ENCODE measurements at regions of chr20 and their contacts with region 1.

Region 1: DNA sequence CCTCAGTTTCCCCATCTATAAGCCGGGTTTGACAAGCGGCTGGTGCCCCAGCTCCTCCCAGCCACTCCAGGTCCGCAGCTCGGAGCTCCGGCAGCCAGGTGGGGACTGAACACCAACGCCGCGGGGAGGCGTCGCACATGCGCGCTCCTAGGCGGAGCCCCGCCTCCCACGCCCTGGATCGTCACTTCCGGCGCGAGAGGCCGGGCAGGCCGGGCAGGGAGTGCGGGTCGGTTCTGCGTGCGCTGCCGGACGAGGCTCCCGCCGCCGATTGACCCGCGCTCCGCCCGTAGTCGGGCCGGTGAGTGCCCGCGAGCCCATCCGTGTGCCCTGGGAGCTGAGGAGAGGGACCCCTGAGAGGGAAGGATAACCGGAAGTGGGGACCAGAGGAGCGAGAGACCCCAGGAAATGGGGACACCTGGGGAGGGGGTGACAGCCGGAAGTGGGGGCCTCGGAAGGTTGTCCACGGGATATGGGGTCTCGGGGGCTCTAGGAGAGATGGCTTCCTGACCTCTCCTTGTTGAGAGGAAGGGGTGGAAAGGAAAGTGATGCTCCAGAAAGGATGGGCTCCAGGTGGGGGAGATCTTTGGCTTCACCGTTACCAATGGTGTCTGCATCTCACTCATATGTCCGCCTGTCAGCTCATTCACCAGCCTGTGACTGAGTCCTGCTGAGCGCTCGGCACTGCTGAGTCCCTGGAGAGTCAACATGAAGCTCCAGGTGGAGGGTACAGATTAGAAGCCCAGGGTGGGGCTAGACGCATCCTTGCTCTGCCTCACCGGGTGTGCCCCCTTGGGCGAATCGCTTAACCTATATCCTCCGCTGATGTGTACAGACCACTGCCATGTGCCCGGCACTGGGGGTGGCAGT is at the start of gene TTPAL:
- DNase-seq: peak; percentile 68
- ATAC-seq: peak; percentile 97
- H3K4me3 ChIP-seq: peak within 1 kb of the TSS; percentile 75
- H3K27ac ChIP-seq: peak within 1 kb of the TSS; percentile 90
- H3K4me1 ChIP-seq: no peaks in the 10 kb centered on the region; the same call in 1 of the 2 replicates
- H3K27me3 ChIP-seq: no peaks in the 10 kb centered on the region
- CTCF ChIP-seq: peak; percentile 11 to 60 (median 17); a peak in 3 of 6 replicates
- EP300 ChIP-seq: no peak
- POLR2A ChIP-seq: peak; percentile 100
- RAD21 ChIP-seq: peak; percentile 32; the same call in 1 of the 2 replicates
- polyA plus RNA-seq, gene TTPAL: 4.0 to 4.3 TPM

Region 2: GRCh38 chr20:44521484-44522481 is 45.9 kb after region 1 on chr20 and contains the start of gene SERINC3:
- CTCF ChIA-PET with region 1: interaction called, 15 read pairs
- POLR2A ChIA-PET with region 1: interaction called, 12 read pairs
- RAD21 ChIA-PET with region 1: interaction called, 3 read pairs
- SMC1A ChIA-PET with region 1: interaction called, 8 read pairs
- in situ Hi-C with region 1: no loop called
- intact Hi-C with region 1: no loop called
- DNase-seq: peak; percentile 78
- ATAC-seq: peak; percentile 98
- H3K4me3 ChIP-seq: peak within 1 kb of the TSS; percentile 94
- H3K27ac ChIP-seq: peak within 1 kb of the TSS; percentile 93
- H3K4me1 ChIP-seq: peaks cover 7% of the 10 kb centered on the region; the same call in 1 of the 2 replicates
- H3K27me3 ChIP-seq: no peaks in the 10 kb centered on the region
- CTCF ChIP-seq: peak in 2 of 3 experiments; percentile 27 to 29; a peak in 3 of 6 replicates
- EP300 ChIP-seq: peak; percentile 23 to 25; a peak in 1 of 4 replicates
- POLR2A ChIP-seq: peak; percentile 95
- RAD21 ChIP-seq: peak; percentile 29; the same call in 1 of the 2 replicates
- polyA plus RNA-seq, gene SERINC3: 37.8 to 55.6 TPM

Region 3: GRCh38 chr20:44598423-44599305 is 122.7 kb after region 1 on chr20:
- CTCF ChIA-PET with region 1: interaction called, 4 read pairs
- POLR2A ChIA-PET with region 1: no interaction called
- RAD21 ChIA-PET with region 1: interaction called, 3 read pairs
- SMC1A ChIA-PET with region 1: interaction called, 13 read pairs
- in situ Hi-C with region 1: no loop called
- intact Hi-C with region 1: no loop called
- DNase-seq: no peak
- ATAC-seq: peak; percentile 75
- H3K4me3 ChIP-seq: peak overlapping the region; percentile 28; the same call in 1 of the 2 replicates
- H3K27ac ChIP-seq: peak overlapping the region; percentile 0
- H3K4me1 ChIP-seq: peaks cover 25% of the 10 kb centered on the region
- H3K27me3 ChIP-seq: no peaks in the 10 kb centered on the region
- CTCF ChIP-seq: peak; percentile 12 to 25 (median 17); a peak in 3 of 6 replicates
- EP300 ChIP-seq: no peak
- POLR2A ChIP-seq: peak; percentile 58
- RAD21 ChIP-seq: peak; percentile 46; the same call in 1 of the 2 replicates

Measured in GM12878 (cell line).